H1 (cell line): ENCODE measurements at regions of chr1 and their contacts with region 1.

Region 1: GRCh38 chr1:161225534-161226319 is at the start of gene TOMM40L:
- DNase-seq: peak; percentile 86 to 96
- H3K4me3 ChIP-seq: peak within 1 kb of the TSS; percentile 75 to 93 (median 83)
- H3K27ac ChIP-seq: no peak within 1 kb of the TSS; the same call in 1 of the 2 replicates
- H3K4me1 ChIP-seq: peaks cover 2 to 6% (median 4%) of the 10 kb centered on the region in 4 experiments
- H3K27me3 ChIP-seq: 0 out of 7 replicates have a peak, but pooled peaks cover 0 to 2% (median 0%) of the 10 kb centered on the region in 4 experiments
- CTCF ChIP-seq: peak in 2 of 3 experiments; percentile 41 to 56; a peak in 3 of 4 replicates
- EP300 ChIP-seq: no peak
- POLR2A ChIP-seq: no peak
- RAD21 ChIP-seq: peak in 1 of 2 experiments; percentile 43; a peak in 2 of 4 replicates
- total RNA-seq, gene TOMM40L: 13.8 and 15.0 TPM in 2 replicates

Region 2: GRCh38 chr1:161238039-161238473 is 12.3 kb after region 1 on chr1 and contains the start of gene NR1I3:
- CTCF ChIA-PET with region 1: interaction called, 84 read pairs
- POLR2A ChIA-PET with region 1: interaction called, 6 read pairs
- DNase-seq: no peak
- H3K4me3 ChIP-seq: no peak within 1 kb of the TSS
- H3K27ac ChIP-seq: no peak within 1 kb of the TSS
- H3K4me1 ChIP-seq: no peaks in the 10 kb centered on the region
- H3K27me3 ChIP-seq: no peaks in the 10 kb centered on the region
- CTCF ChIP-seq: no peak
- EP300 ChIP-seq: no peak
- POLR2A ChIP-seq: no peak
- RAD21 ChIP-seq: no peak
- total RNA-seq, gene NR1I3: not detected in 2 replicates

Region 3: DNA sequence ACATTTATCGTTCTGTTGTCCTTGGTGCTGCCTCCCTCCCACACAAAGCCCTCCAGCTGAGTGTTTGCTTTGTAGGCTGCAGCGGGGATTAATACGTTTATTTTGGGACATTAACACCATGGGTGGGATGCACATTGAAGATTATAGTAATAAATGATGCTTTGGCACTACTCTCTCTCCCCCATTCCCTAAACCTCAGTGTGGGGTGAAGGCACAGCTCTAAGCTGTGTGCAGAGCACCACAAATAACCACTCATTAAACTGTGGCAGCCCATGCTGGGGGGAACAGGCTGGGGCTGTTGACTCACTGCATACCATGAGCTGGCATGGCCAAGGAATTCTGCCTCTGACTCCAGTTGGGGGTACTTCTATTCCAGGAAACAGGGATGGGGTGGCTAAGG is 40.5 kb after region 1 on chr1:
- CTCF ChIA-PET with region 1: interaction called, 67 read pairs
- POLR2A ChIA-PET with region 1: no interaction called
- DNase-seq: no peak
- H3K4me3 ChIP-seq: no peak overlapping the region
- H3K27ac ChIP-seq: no peak overlapping the region
- H3K4me1 ChIP-seq: peaks cover under 1 to 11% (median 2%) of the 10 kb centered on the region in 4 experiments; a peak in 4 of 7 replicates
- H3K27me3 ChIP-seq: no peaks in the 10 kb centered on the region; a peak in 2 of 7 replicates
- CTCF ChIP-seq: no peak
- EP300 ChIP-seq: no peak
- POLR2A ChIP-seq: no peak
- RAD21 ChIP-seq: no peak

Region 4: DNA sequence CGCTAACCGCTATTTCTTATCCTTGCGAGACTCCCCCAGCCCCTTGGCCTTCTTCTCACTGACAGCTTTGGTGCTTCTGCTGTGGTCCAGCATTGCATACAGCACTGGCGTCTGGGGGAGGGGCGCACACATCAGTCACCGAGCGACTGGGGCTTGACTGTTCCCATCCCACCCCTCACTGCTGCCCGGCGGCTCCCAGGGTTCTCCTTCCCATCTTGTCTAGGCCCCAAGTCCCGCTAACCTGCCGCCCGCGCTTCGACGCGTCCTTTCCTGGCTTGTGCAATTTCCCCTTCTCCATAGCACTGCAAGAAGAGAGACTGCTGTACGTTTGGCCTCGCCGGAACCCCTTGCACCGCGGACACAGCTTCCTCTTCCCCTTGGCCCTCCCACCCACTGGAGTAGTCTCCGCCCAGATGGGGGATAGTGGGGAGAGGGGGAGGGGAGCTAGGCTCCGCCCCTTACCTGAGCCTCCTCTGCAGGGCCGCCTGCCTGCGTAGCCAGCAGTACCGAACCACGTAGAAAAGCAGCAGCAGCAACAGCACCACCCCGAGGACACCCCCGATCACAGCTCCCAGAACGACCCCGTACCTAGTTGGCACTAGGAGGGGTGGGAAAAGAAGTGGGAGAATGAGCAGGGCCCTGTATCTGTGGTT is 80.3 kb after region 1 on chr1:
- CTCF ChIA-PET with region 1: interaction called, 201 read pairs
- POLR2A ChIA-PET with region 1: interaction called, 6 read pairs
- DNase-seq: peak; percentile 96 to 97
- H3K4me3 ChIP-seq: peak overlapping the region; percentile 70 to 87 (median 79)
- H3K27ac ChIP-seq: no peak overlapping the region
- H3K4me1 ChIP-seq: peaks cover 0 to 16% (median 9%) of the 10 kb centered on the region in 4 experiments; a peak in 6 of 7 replicates
- H3K27me3 ChIP-seq: no peaks in the 10 kb centered on the region
- CTCF ChIP-seq: peak; percentile 84 to 90 (median 89)
- EP300 ChIP-seq: peak in 1 of 2 experiments; percentile 35; a peak in 1 of 3 replicates
- POLR2A ChIP-seq: peak in 1 of 2 experiments; percentile 55; a peak in 1 of 3 replicates
- RAD21 ChIP-seq: peak; percentile 82 to 85

Region 5: GRCh38 chr1:161330346-161330745 is 104.6 kb after region 1 on chr1:
- CTCF ChIA-PET with region 1: interaction called, 10 read pairs
- POLR2A ChIA-PET with region 1: no interaction called
- DNase-seq: no peak
- H3K4me3 ChIP-seq: no peak overlapping the region
- H3K27ac ChIP-seq: no peak overlapping the region
- H3K4me1 ChIP-seq: no peaks in the 10 kb centered on the region
- H3K27me3 ChIP-seq: no peaks in the 10 kb centered on the region
- CTCF ChIP-seq: no peak
- EP300 ChIP-seq: no peak
- POLR2A ChIP-seq: no peak
- RAD21 ChIP-seq: no peak